ENCODE measurements at regions of chr20 and their contacts with region 1.

Region 1: GRCh38 chr20:5065879-5066383 is 53.8 kb downstream of the PCNA start:
- DNase-seq: peak; percentile 99
- H3K4me3 Mint-ChIP-seq: no peak overlapping the region
- H3K27ac Mint-ChIP-seq: peak overlapping the region; percentile 98
- H3K4me1 Mint-ChIP-seq: peaks cover 26% of the 10 kb centered on the region
- H3K27me3 Mint-ChIP-seq: no peaks in the 10 kb centered on the region
- CTCF ChIP-seq: no peak

Region 2: DNA sequence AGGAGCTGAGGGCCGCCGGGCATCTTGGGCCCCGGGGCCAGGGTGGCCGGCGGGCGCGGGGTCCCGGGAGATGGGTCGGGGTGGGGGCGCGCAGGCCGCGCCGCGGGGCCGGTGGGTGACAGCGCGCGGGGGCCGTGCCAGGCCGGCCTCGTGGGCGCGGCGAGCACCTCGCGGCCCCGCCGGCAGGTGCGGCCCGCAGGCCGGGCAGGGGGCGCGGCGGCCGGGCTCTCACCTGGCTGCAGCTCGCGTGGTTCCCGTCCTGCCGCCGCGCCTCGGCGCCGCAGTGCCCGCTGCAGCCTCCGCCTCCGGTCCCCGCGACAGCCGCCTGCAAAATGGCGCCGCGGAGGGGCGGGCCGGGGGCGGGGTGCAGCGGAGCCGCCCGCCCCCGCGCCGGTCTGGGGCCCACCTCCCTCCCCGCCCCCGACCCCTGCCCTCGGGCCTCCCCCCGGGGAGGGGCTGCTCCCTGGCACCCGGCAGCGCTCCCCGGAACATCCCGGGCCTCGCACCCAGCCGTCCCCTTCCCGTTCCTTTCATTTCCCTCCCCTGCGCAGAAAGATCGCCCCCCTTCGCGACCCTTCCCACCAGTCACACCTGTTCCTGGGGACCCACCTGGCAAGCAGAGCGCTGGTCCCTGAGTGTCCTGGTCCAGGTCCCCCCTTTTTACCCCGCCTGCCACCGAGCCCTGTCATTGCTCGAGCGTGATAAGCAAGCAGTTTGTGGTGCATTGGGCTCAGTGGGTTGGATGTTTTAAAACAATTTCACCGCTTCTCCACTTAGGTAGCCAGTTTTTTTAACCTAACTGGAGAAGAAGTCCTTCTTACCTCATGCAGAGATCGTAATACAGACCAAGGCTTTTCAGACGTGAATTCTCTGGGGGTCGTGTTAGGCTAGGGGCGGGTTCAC is 64.5 kb before region 1 on chr20 and contains the start of gene SLC23A2:
- CTCF ChIA-PET with region 1: no interaction called
- POLR2A ChIA-PET with region 1: interaction called, 8 read pairs
- intact Hi-C with region 1: loop called (anchors 10 kb)
- DNase-seq: no peak
- H3K4me3 Mint-ChIP-seq: peak within 1 kb of the TSS; percentile 85
- H3K27ac Mint-ChIP-seq: peak within 1 kb of the TSS; percentile 81
- H3K4me1 Mint-ChIP-seq: peaks cover 20% of the 10 kb centered on the region
- H3K27me3 Mint-ChIP-seq: no peaks in the 10 kb centered on the region
- CTCF ChIP-seq: no peak
- total RNA-seq, gene SLC23A2: 24.0 and 26.5 TPM in 2 replicates

Region 3: DNA sequence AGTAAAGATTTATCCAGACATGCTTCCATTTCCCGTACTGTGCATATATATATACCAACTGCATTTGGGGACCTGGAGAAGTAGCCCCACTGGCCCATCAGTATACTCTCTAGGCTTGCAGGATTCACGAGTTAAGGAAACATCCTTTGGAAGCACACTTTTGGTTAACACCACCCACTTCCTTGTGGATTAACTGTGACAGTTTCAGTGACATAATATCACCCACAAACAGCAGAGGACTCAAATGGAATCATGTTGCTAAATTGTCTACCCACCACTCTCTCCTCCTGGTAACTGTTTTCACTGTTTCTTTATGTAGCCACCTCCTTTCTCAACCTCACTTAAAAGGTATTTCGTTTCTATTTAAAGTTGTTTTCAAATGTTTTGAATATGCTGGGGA is 195.8 kb after region 1 on chr20:
- CTCF ChIA-PET with region 1: no interaction called
- POLR2A ChIA-PET with region 1: no interaction called
- intact Hi-C with region 1: no loop called
- DNase-seq: no peak
- H3K4me3 Mint-ChIP-seq: no peak overlapping the region
- H3K27ac Mint-ChIP-seq: no peak overlapping the region
- H3K4me1 Mint-ChIP-seq: no peaks in the 10 kb centered on the region
- H3K27me3 Mint-ChIP-seq: peaks cover 89% of the 10 kb centered on the region
- CTCF ChIP-seq: no peak